GM12878 (cell line): ENCODE measurements at regions of chr1 and their contacts with region 1.

Region 1: DNA sequence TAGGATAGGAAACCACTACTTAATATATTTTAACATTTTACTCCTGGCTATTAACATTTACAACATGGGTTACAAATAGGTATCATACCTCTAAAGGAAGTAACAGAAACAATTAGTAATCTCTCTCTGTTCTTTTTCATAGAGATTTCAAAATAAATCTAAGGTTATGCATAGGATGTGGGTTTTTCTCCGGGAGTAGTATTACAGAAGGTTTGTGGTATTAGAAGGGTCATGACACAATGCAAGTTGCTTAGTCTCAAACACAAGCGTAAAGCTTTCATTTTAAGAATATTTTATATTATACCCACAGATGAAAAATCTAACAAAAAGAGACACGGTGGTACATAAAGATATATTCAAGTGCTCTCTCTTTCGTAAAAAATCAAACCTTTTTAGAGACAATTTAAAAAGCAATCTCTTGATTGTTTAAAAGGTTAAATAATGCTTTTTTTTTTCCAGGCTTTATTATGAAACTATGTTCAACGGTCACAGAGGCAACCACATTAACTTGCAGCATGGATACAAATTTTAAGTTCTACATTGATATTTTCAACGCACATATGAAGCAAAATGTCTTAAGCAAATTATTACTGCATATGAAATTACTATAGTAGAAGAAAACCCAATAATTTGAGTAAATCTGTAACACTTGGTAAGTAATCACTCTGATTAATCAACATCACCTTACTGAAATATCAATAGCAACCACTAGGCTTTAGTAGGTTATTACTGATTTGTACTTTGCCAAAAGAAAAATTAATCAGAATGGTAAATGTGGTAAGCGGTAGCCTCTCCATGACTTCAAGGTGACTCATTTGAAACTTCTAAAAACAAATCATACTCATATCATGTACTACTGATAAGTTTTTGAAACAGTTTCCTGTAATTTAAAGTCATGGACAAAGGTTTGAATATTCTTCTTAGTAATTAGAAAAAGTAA is 97.4 kb upstream of the GFI1 start:
- DNase-seq: peak; percentile 47
- ATAC-seq: peak; percentile 87
- H3K4me3 ChIP-seq: no peak overlapping the region
- H3K27ac ChIP-seq: peak overlapping the region; percentile 73
- H3K4me1 ChIP-seq: peaks cover 8% of the 10 kb centered on the region
- H3K27me3 ChIP-seq: no peaks in the 10 kb centered on the region
- CTCF ChIP-seq: peak in 2 of 3 experiments; percentile 15 to 32; a peak in 1 of 6 replicates
- EP300 ChIP-seq: peak; percentile 77 to 92; a peak in 3 of 4 replicates
- POLR2A ChIP-seq: no peak
- RAD21 ChIP-seq: peak; percentile 23; the same call in 1 of the 2 replicates

Region 2: GRCh38 chr1:92380867-92381266 is 203.2 kb before region 1 on chr1:
- CTCF ChIA-PET with region 1: no interaction called
- POLR2A ChIA-PET with region 1: no interaction called
- RAD21 ChIA-PET with region 1: no interaction called
- SMC1A ChIA-PET with region 1: no interaction called
- in situ Hi-C with region 1: no loop called
- intact Hi-C with region 1: no loop called
- DNase-seq: no peak
- ATAC-seq: no peak
- H3K4me3 ChIP-seq: no peak overlapping the region
- H3K27ac ChIP-seq: no peak overlapping the region
- H3K4me1 ChIP-seq: no peaks in the 10 kb centered on the region
- H3K27me3 ChIP-seq: no peaks in the 10 kb centered on the region
- CTCF ChIP-seq: no peak
- EP300 ChIP-seq: no peak
- POLR2A ChIP-seq: no peak
- RAD21 ChIP-seq: no peak

Region 3: GRCh38 chr1:92399076-92399475 is 185.0 kb before region 1 on chr1:
- CTCF ChIA-PET with region 1: no interaction called
- POLR2A ChIA-PET with region 1: no interaction called
- RAD21 ChIA-PET with region 1: interaction called, 3 read pairs
- SMC1A ChIA-PET with region 1: interaction called, 8 read pairs
- in situ Hi-C with region 1: no loop called
- intact Hi-C with region 1: loop called (anchors 5 kb)
- DNase-seq: peak; percentile 60
- ATAC-seq: peak; percentile 90
- H3K4me3 ChIP-seq: no peak overlapping the region
- H3K27ac ChIP-seq: no peak overlapping the region
- H3K4me1 ChIP-seq: peaks cover 5% of the 10 kb centered on the region; the same call in 1 of the 2 replicates
- H3K27me3 ChIP-seq: no peaks in the 10 kb centered on the region
- CTCF ChIP-seq: no peak
- EP300 ChIP-seq: peak in 1 of 2 experiments; percentile 49; a peak in 1 of 4 replicates
- POLR2A ChIP-seq: no peak
- RAD21 ChIP-seq: peak; percentile 13; the same call in 1 of the 2 replicates

Region 4: DNA sequence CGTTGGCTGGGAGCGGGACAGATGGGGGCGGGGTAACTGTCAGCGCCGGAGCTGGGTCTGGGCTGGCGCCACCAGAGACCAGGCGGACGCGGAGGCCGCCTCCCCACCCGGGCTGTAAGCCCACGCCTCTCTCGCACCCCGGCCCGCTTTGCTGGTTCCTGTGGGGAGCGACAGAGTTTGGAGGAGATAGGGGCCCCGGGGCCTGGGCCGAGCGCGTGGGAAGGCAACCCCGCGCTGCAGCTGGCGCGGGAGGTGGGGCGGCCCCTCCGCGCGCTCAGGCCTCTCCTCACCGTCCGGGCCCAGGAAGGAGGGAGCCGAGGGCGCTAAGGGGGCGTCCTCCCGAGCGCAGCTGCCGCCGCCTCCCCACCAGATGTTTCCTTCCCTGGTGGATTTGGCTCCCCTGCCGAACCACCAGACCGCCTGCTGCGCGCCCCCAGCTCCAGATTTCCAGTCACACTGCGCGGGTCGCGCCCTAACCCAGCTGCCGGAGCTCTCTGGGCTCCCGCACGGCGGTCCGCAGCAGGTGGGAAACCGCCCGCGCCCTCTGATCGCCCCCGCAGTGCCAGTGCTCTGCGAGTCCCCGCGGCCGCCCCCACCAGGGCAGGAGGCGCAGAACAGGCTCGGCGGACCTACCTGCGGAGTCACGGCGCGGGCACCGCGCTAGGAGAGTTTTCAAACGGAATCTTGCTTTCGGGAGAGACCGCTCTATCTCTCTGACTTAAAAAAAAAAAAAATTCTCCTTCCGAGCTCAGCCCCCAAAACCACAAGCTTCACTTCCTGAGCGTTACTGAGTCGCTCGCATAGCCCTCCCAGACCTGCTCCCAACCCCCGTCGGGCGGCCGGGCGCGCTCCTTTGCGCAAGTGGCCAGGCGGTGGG is 98.5 kb before region 1 on chr1:
- CTCF ChIA-PET with region 1: interaction called, 7 read pairs
- POLR2A ChIA-PET with region 1: interaction called, 8 read pairs
- RAD21 ChIA-PET with region 1: interaction called, 19 read pairs
- SMC1A ChIA-PET with region 1: interaction called, 13 read pairs
- in situ Hi-C with region 1: loop called (anchors 5 kb)
- intact Hi-C with region 1: loop called (anchors 1 kb)
- DNase-seq: no peak
- ATAC-seq: peak; percentile 63
- H3K4me3 ChIP-seq: peak overlapping the region; percentile 93
- H3K27ac ChIP-seq: peak overlapping the region; percentile 77
- H3K4me1 ChIP-seq: peaks cover 6% of the 10 kb centered on the region
- H3K27me3 ChIP-seq: no peaks in the 10 kb centered on the region
- CTCF ChIP-seq: peak; percentile 55 to 69 (median 56)
- EP300 ChIP-seq: no peak
- POLR2A ChIP-seq: peak; percentile 74
- RAD21 ChIP-seq: peak; percentile 45

Region 5: DNA sequence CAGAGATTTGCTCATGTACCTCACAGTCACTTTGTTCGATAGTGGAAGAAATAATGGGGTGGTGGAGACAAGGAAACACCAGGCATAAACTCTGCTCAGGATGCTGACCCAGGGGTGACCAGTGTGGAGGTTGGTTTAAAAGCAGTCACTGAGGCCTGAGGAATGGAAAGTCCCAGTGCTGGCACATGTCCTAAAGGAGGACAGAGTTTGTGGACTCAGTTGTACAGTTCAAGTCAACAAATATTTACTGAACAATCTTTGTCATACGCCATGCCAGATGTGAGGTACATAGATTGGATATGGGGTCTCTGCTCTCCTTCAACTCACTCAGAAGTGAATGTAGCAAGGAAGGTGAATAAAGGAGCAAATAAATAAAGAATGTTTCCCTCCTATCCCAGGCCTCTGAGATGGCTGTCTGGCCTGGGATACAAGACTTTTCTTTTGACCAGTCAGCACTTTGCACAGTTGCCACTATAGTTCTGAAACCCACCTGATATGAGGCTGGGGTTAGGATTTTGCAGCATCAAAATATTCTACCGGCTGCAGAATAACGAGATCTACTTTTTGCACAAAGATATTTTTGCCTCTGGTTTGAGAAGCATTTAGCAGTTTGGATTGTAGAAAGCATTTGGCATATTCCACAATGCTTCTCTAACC is 89.5 kb before region 1 on chr1:
- CTCF ChIA-PET with region 1: interaction called, 3 read pairs
- POLR2A ChIA-PET with region 1: interaction called, 5 read pairs
- RAD21 ChIA-PET with region 1: no interaction called
- SMC1A ChIA-PET with region 1: interaction called, 10 read pairs
- in situ Hi-C with region 1: no loop called
- intact Hi-C with region 1: no loop called
- DNase-seq: no peak
- ATAC-seq: no peak
- H3K4me3 ChIP-seq: no peak overlapping the region
- H3K27ac ChIP-seq: no peak overlapping the region
- H3K4me1 ChIP-seq: no peaks in the 10 kb centered on the region
- H3K27me3 ChIP-seq: no peaks in the 10 kb centered on the region
- CTCF ChIP-seq: no peak
- EP300 ChIP-seq: no peak
- POLR2A ChIP-seq: no peak
- RAD21 ChIP-seq: no peak

Region 6: GRCh38 chr1:92563457-92564216 is 20.5 kb before region 1 on chr1:
- CTCF ChIA-PET with region 1: interaction called, 3 read pairs
- POLR2A ChIA-PET with region 1: interaction called, 3 read pairs
- RAD21 ChIA-PET with region 1: interaction called, 6 read pairs
- SMC1A ChIA-PET with region 1: interaction called, 7 read pairs
- in situ Hi-C with region 1: no loop called
- intact Hi-C with region 1: loop called (anchors 1 kb)
- DNase-seq: peak; percentile 45
- ATAC-seq: peak; percentile 100
- H3K4me3 ChIP-seq: no peak overlapping the region
- H3K27ac ChIP-seq: peak overlapping the region; percentile 11; the same call in 1 of the 2 replicates
- H3K4me1 ChIP-seq: peaks cover 10% of the 10 kb centered on the region; the same call in 1 of the 2 replicates
- H3K27me3 ChIP-seq: no peaks in the 10 kb centered on the region
- CTCF ChIP-seq: no peak
- EP300 ChIP-seq: peak; percentile 69 to 94; a peak in 3 of 4 replicates
- POLR2A ChIP-seq: no peak
- RAD21 ChIP-seq: no peak

Region 7: GRCh38 chr1:92572520-92572919 is 11.6 kb before region 1 on chr1:
- CTCF ChIA-PET with region 1: interaction called, 9 read pairs
- POLR2A ChIA-PET with region 1: interaction called, 4 read pairs
- RAD21 ChIA-PET with region 1: interaction called, 4 read pairs
- SMC1A ChIA-PET with region 1: interaction called, 15 read pairs
- in situ Hi-C with region 1: no loop called
- intact Hi-C with region 1: no loop called
- DNase-seq: no peak
- ATAC-seq: no peak
- H3K4me3 ChIP-seq: no peak overlapping the region
- H3K27ac ChIP-seq: no peak overlapping the region
- H3K4me1 ChIP-seq: no peaks in the 10 kb centered on the region
- H3K27me3 ChIP-seq: no peaks in the 10 kb centered on the region
- CTCF ChIP-seq: no peak
- EP300 ChIP-seq: no peak
- POLR2A ChIP-seq: no peak
- RAD21 ChIP-seq: no peak

Region 8: DNA sequence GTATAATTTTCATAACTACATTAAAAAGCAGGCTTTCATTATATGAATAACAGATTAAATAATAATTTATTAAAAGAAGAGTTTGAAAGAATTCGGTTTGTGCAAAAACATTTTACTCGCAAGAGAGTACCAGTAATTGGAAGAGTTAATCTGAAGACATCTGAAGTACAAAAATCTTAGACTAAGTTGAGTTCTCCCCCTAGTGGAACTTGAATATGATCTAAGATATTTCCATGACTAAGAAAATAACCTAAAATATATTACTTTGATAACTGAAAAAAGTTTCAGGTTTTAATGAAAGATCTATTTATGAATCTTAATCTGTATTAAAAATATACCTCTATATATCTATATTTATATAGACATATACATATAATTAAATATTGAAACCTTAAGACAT is 15.1 kb after region 1 on chr1:
- CTCF ChIA-PET with region 1: interaction called, 18 read pairs
- POLR2A ChIA-PET with region 1: interaction called, 5 read pairs
- RAD21 ChIA-PET with region 1: interaction called, 8 read pairs
- SMC1A ChIA-PET with region 1: interaction called, 23 read pairs
- in situ Hi-C with region 1: no loop called
- intact Hi-C with region 1: no loop called
- DNase-seq: no peak
- ATAC-seq: peak; percentile 76
- H3K4me3 ChIP-seq: no peak overlapping the region
- H3K27ac ChIP-seq: no peak overlapping the region
- H3K4me1 ChIP-seq: no peaks in the 10 kb centered on the region
- H3K27me3 ChIP-seq: no peaks in the 10 kb centered on the region
- CTCF ChIP-seq: peak; percentile 21 to 55 (median 25); a peak in 3 of 6 replicates
- EP300 ChIP-seq: no peak
- POLR2A ChIP-seq: no peak
- RAD21 ChIP-seq: peak; percentile 82